ENCODE measurements at regions of chr4 and their contacts with region 1.

Region 1: DNA sequence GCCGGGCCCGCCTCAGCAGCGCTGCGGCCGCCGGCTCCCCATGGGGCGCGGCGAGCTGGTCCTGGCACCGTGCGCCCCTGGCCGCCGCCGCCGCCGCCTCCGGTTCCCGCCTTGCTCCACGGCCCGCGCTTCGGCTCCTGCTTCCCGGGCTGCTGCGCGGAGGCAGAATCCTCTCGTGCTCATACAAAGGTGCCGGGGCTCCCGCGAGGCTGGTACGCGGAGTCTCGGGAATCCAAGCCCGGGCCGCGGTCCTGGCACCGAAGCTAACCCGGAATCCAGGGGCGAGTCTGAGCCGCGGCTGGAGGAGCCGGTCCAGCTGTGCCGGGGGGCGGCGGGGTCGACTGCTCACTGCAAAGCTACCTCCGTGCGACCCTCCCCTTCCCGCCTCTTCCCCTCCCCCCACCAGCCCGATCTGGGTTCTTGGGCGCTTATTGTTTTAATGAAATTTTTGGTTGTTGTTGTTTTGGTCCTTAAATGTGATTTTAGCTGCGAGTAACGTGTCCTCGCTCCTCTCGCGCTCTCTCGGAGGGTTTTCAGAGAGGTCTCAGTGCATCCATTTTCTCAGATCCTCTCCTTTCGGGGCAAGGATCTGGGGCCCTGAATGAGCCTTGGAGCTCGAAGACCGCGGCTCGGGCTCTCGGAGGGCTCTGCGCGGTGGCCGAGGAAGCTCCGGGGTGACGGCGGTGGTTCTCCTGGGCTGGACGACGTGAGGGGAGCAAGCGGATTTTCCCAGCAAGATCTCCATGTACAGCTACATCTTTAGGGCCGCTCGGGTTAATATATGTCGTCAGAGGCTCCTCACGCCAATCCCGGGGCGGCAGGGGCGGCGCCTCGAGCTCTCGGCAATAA is at the start of gene HAND2:
- DNase-seq: peak; percentile 89
- ATAC-seq: peak; percentile 75
- total RNA-seq, gene HAND2: 151 TPM

Region 2: GRCh38 chr4:173346074-173346473 is 183.6 kb before region 1 on chr4:
- intact Hi-C with region 1: no loop called
- DNase-seq: no peak
- ATAC-seq: no peak

Region 3: DNA sequence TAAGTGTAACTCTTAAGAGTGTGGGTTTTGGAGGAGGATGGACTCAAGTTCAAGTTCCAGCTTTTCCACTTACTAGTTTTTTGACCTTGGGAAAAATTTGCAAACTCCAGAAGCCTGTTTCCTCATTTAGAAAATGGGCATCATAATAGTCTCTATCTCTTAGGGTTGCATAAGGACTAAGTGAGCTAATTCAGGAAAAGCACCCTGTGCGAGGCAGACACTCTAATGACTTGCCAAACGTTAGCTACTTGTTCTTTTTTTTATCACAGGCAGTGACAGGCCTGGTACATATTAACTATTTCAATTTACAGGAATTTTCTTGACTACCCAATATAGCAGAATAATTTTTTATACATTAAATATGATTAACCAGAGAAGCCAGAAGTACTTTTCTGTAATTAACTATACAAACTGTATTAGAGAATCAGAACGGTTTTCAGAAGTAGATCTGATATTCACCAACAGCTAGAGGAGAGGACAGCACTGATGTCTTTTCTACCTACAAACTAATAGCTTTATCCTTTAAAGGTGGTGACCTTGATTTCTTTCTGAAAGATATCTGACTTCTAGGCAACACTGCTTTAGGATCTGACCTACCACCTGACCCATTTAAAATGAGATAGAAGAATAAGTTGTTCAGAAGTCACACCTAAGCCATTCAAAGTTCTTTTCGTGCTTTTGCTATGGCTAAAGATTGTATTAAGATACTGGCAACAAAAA is 139.9 kb after region 1 on chr4:
- intact Hi-C with region 1: loop called (anchors 5 kb)
- DNase-seq: no peak
- ATAC-seq: peak; percentile 97

Region 4: GRCh38 chr4:173746424-173746823 is 216.7 kb after region 1 on chr4:
- intact Hi-C with region 1: loop called (anchors 1 kb)
- DNase-seq: no peak
- ATAC-seq: peak; percentile 61

Region 5: GRCh38 chr4:174156239-174156826 is 626.6 kb after region 1 on chr4:
- intact Hi-C with region 1: loop called (anchors 10 kb)
- DNase-seq: no peak
- ATAC-seq: peak; percentile 73

Measured in Right ventricle myocardium inferior (tissue), 1 donor.